ENCODE measurements at regions of chr22 and their contacts with region 1.

Region 1: GRCh38 chr22:22431271-22432220 is 77.0 kb downstream of the ZNF280B start:
- DNase-seq: peak; percentile 54 to 75 (median 70)
- H3K4me3 ChIP-seq: no peak overlapping the region
- H3K27ac ChIP-seq: no peak overlapping the region
- H3K4me1 ChIP-seq: no peaks in the 10 kb centered on the region
- H3K27me3 ChIP-seq: peaks cover 0 to 11% (median 0%) of the 10 kb centered on the region in 5 experiments

Region 2: DNA sequence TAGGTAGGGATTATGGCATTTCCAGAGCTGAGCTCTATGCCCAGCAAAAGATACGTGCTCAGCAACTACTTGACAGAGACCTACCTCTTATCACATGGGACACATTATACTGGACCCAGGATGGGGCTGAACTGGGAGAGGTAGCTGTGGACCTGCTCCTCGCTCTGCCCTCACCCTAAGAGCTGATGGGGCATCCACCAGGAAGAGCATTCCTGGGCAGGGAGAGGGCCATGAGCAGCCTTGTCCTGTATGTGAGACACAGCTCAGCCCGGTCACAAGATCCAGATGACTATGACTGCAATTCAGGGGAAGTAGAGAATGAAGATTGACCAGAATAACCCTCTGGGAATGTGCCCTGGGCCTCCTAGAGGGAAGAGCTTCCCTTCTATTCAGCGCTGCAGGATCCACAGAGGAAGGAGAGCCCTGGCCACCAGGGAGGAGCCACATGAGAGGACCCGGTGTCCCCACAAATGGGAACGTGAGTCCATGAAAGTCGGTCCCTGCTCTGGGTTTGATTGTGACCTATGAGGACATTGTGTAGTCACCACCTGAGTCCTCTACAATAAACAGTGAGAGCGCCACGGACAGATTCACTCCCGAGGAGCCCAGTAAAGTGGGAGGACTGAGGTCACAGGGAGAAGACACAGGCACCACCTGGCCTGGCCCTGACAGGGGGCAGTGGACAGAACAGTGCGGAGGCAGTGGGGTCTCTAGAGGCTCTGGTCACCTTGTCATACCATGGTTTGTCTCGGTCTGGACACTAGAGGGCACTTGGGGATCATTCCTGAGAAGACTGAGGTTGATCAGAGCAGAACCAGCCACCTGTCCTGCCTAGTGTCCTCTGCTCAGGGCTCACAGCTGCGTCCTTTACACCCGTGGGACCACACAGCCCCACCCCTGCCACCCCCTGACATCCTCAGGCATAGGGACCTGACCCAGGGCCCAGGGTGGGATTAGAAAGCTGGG is 22.5 kb before region 1 on chr22:
- CTCF ChIA-PET with region 1: interaction called, 18 read pairs
- POLR2A ChIA-PET with region 1: no interaction called
- DNase-seq: peak in 2 of 3 donors; percentile 37 to 51
- H3K4me3 ChIP-seq: no peak overlapping the region
- H3K27ac ChIP-seq: no peak overlapping the region
- H3K4me1 ChIP-seq: peaks cover 3 to 19% (median 17%) of the 10 kb centered on the region in 4 experiments
- H3K27me3 ChIP-seq: no peaks in the 10 kb centered on the region

Region 3: DNA sequence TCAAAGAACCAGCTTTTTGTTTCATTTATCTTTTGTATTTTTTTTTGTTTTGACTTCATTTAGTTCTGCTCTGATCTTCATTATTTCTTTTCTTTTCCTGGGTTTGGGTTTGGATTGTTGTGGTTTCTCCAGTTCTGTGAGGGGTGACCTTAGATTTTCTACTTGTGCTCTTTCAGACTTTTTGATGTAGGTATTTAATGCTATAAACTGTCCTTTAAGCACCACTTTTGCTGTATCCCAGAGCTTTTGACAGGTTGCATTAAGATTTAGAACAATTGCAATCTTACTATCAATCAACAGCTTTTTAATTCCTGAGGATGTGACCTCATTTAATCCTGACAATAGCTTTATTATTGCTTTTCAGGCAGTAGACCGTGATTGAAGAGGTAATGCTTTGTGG is 17.3 kb before region 1 on chr22:
- CTCF ChIA-PET with region 1: interaction called, 18 read pairs
- POLR2A ChIA-PET with region 1: no interaction called
- DNase-seq: no peak
- H3K4me3 ChIP-seq: no peak overlapping the region
- H3K27ac ChIP-seq: no peak overlapping the region
- H3K4me1 ChIP-seq: peaks cover 3 to 16% (median 14%) of the 10 kb centered on the region in 4 experiments
- H3K27me3 ChIP-seq: peaks cover 2 to 27% (median 3%) of the 10 kb centered on the region in 5 experiments

Region 4: DNA sequence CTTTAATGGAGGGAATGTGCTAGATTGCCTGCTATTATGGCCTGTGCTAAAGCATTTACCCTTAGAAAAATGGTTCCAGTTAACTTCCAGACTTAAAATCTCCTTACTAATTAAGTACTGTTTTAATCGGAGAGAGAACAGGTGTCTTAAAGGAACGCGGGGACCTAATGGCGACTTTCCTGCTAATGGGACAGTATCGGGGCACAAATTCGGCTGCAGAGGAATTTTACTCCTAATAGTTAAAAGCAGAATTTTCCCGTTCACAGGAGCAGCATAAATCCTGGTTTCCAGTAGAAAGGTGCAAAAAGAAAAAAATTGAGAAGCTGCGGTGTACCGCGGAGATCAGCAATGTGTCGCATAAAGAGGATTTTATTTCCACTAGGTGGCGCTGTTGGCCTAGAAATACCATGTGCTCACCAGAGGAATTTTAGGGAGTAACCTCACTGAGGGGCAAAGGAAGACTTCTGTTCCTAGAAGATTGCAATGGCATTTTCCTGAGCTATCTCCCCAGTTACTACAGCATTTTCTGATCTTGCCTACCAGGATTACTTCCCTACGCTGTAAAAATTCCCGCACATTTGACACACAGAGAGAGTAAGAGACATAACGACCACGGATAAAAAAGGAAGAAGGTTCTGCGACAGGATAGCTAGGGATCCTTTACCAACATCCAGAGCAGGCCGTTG is 32.5 kb after region 1 on chr22:
- CTCF ChIA-PET with region 1: interaction called, 11 read pairs
- POLR2A ChIA-PET with region 1: no interaction called
- DNase-seq: peak; percentile 76 to 84 (median 77)
- H3K4me3 ChIP-seq: no peak overlapping the region
- H3K27ac ChIP-seq: no peak overlapping the region
- H3K4me1 ChIP-seq: peaks cover 0 to 4% (median 0%) of the 10 kb centered on the region in 4 experiments
- H3K27me3 ChIP-seq: peaks cover 0 to 34% (median 2%) of the 10 kb centered on the region in 5 experiments

Region 5: GRCh38 chr22:22552630-22553029 is 121.1 kb after region 1 on chr22:
- CTCF ChIA-PET with region 1: interaction called, 12 read pairs
- POLR2A ChIA-PET with region 1: no interaction called
- DNase-seq: peak; percentile 40 to 64 (median 58)
- H3K4me3 ChIP-seq: no peak overlapping the region
- H3K27ac ChIP-seq: no peak overlapping the region
- H3K4me1 ChIP-seq: peaks cover 0 to 8% (median 6%) of the 10 kb centered on the region in 4 experiments
- H3K27me3 ChIP-seq: no peaks in the 10 kb centered on the region